ENCODE measurements at regions of chr4 and their contacts with region 1.

Region 1: DNA sequence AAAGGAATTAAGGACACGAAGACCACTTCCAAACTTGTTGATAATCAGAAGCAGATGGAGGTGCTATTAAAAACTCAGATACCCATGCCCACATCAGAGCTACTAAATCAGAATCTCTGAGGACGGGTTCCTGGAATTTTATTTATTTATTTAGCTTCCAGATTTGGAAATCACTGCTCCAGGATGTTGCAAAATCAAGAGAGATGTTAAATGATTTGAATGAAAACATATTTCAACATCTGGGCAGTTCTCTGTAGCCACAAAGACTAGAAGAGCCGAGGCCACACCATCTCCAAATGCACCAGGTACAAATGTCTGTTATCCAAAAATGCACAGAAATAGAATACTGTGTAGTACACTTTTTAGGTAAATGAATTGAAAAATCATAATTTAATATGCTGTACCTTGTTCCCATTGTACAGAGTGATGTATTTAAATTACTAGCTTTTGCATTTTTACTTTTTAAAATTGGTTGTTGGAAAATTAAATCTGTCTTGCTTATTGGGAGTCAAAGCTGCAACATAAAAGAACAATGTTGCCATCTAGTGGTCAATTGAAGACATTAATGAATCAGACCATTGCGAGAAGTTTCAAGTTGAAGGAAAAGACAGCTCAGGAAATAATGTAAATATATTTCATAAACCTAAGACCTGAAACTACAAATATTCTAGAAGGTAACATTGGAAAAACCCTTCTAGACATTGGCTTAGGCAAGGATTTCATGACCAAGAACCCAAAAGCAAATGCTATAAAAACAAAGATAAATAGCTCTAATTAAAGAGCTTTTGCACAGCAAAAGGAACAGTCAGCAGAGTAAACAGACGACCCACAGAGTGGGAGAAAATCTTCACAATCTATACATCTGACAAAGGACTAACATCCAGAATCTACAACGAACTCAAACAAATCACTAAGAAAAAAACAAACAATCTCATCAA is 151.3 kb upstream of the TTC29 start:
- DNase-seq: no peak
- ATAC-seq: peak; percentile 26

Region 2: GRCh38 chr4:146095091-146095690 is 1001.7 kb before region 1 on chr4:
- intact Hi-C with region 1: loop called (anchors 10 kb)
- DNase-seq: no peak
- ATAC-seq: no peak

Region 3: DNA sequence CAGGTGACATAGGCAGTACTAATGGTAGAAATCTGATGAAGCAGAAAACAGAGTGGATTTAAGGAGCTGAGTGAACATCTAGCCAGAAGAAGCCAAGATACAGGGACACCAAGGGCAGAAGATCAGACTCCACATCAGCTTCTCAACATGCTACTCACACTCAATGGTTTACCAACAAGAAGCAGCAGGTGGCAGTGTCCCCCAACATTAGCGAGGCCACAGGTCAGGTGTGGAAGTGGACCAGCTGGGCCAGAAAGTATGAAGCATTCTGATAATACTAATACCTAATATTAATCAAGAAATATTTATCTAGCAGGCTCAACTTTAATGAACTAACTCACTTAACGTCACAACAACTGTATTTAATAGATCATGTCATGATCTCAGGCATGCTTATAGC is 77.9 kb before region 1 on chr4:
- intact Hi-C with region 1: loop called (anchors 1 kb)
- DNase-seq: peak; percentile 66
- ATAC-seq: peak; percentile 84